ENCODE measurements at regions of chr2 and their contacts with region 1.

Region 1: GRCh38 chr2:66574701-66575624 is 140.0 kb downstream of the MEIS1 start:
- DNase-seq: peak; percentile 95
- H3K4me3 ChIP-seq: peak overlapping the region; percentile 65 to 73 (median 68)
- H3K27ac ChIP-seq: peak overlapping the region; percentile 95 to 98 (median 97)
- H3K4me1 ChIP-seq: peaks cover 22 to 98% (median 69%) of the 10 kb centered on the region in 4 donors
- H3K27me3 ChIP-seq: peaks cover 0 to 33% (median 4%) of the 10 kb centered on the region in 4 donors
- CTCF ChIP-seq: peak; percentile 46 to 69 (median 51)
- EP300 ChIP-seq: no peak
- POLR2A ChIP-seq: no peak

Region 2: GRCh38 chr2:66649006-66649405 is 74.0 kb after region 1 on chr2:
- intact Hi-C with region 1: no loop called
- DNase-seq: no peak
- H3K4me3 ChIP-seq: no peak overlapping the region
- H3K27ac ChIP-seq: no peak overlapping the region
- H3K4me1 ChIP-seq: no peaks in the 10 kb centered on the region
- H3K27me3 ChIP-seq: no peaks in the 10 kb centered on the region
- CTCF ChIP-seq: no peak
- EP300 ChIP-seq: no peak
- POLR2A ChIP-seq: no peak

Region 3: GRCh38 chr2:67322353-67323001 is 747.5 kb after region 1 on chr2:
- intact Hi-C with region 1: loop called (anchors 10 kb)
- DNase-seq: no peak
- H3K4me3 ChIP-seq: no peak overlapping the region
- H3K27ac ChIP-seq: peak overlapping the region; percentile 5 to 53 (median 24)
- H3K4me1 ChIP-seq: peaks cover 9 to 43% (median 29%) of the 10 kb centered on the region in 4 donors
- H3K27me3 ChIP-seq: no peaks in the 10 kb centered on the region
- CTCF ChIP-seq: peak in 2 of 3 experiments; percentile 51 to 63
- EP300 ChIP-seq: no peak
- POLR2A ChIP-seq: no peak

Region 4: DNA sequence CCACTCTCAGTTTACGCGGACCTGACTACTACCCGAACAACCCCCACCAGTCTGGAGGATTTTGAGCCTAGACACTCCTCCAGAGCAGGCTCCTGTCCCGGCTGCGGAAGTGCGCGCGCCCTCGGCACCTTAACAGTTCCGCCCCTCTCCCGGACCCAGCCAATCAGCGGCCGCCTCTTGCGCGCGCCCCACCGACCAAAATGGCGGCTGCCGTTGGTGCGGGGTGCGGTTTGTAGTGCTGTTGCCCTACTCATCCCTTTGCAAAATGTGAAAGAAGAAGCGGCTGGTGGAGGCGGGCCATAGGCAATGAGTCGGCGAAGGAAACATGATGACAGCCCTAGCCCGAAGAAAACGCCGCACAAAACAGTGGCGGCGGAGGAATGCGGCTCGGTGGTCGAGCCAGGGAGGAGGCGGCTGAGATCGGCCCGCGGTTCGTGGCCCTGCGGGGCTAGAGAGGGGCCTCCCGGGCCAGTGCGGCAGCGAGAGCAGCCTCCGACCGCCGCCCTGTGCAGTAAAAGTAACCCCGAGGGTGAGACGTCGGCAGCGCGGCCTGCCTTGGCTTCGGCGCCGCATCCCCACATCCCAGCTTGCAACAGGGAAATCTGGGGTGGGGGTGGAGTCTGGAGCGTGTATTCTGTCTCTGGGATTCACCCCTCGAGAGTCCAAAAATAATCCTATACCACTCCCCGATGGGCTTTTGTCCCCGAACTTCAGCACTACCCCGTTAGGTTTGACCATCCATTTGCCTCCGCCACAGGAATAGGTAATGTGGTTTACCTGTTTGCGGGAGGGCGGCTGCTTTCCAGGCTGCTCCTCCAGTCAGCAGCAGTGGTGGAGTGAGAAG is 822.4 kb after region 1 on chr2 and contains the start of gene ETAA1:
- intact Hi-C with region 1: loop called (anchors 5 kb)
- DNase-seq: peak; percentile 97
- H3K4me3 ChIP-seq: peak within 1 kb of the TSS; percentile 70 to 98 (median 98)
- H3K27ac ChIP-seq: peak within 1 kb of the TSS; percentile 90 to 96 (median 93)
- H3K4me1 ChIP-seq: peaks cover 7 to 38% (median 32%) of the 10 kb centered on the region in 4 donors
- H3K27me3 ChIP-seq: no peaks in the 10 kb centered on the region
- CTCF ChIP-seq: no peak
- EP300 ChIP-seq: no peak
- POLR2A ChIP-seq: peak; percentile 74
- total RNA-seq, gene ETAA1: 10.4 to 19.5 (median 14.2) TPM